Psoas muscle (tissue), 8 donors: ENCODE measurements at regions of chr10 and their contacts with region 1.

Region 1: DNA sequence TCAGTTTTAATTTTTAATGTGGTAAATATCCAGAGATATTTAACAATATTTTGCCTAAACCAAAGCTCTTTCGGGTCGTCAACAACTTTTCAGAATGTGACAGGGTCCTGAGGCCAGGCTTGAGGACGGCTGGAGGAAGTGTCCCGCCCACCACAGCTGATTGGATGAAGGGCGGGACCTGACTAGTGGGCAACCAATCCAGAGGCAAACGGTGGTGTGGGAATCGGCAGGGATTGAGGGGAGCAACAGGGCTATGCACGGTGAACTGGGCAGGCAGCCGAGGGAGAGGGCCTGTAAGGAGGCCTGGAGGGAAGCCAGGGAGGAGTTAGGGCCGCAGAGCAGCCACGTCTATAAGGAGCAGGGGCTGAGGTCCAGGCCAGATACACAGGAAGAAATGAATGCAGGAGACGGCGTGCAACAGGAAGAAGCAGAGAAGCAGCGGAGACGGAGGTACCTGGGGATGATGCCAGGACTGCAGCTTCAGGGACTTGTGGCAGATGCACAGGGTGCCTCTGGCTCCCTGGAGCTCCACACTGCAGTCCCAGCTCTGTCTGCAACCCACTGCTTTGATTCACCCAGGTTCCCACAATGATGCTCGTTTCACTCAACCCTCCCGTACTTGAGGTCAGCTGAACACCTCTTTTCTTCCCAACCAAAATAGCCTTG is 46.1 kb upstream of the ZMIZ1 start:
- DNase-seq: peak; percentile 59 to 73
- ATAC-seq: peak; percentile 65 to 82 (median 80)
- H3K4me3 ChIP-seq: peak overlapping the region; percentile 49
- H3K27ac ChIP-seq: peak overlapping the region; percentile 92
- H3K4me1 ChIP-seq: peaks cover 24% of the 10 kb centered on the region
- H3K27me3 ChIP-seq: no peaks in the 10 kb centered on the region
- CTCF ChIP-seq: no peak

Region 2: DNA sequence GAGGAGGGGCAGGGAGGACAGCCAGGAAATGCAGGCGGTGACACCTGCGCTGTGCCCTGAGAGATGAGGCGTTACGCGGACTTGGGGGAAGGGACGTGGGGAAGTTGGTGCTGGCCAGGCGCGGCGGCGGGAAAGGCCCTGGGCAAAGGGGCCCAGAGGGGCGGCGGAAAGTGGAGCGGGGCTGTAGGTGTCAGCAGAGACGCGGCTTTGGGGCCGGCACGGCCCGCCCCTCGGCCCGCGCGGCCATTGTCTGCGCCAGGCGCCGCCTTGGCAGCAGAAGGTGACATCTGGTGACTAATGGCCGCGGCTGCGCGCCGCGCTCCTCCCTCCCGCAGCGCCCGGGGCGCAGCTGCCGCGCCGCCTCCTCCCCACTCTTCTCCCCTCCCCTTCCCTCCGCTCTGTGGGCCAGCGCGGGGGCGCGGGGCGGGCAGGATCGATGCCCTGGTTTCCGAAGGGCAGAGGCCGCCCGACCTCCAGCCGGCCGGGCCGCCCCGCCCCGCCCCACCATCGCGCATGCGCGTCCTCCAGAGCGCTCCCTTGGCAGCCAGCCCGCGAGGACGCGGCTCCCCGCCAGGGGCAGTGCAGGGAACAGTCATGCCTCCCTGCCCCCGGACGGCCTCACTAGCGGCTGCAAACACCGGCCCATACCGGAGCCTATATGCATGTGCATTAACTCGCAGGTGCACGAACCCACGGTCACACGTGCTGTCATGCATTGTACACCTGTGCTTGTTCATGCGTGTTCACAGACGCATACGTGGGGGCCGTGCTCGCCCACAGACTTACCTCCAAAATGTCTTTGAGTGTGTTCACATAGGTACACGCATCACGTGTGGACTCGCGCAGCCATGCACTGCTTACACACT is 719.5 kb before region 1 on chr10:
- intact Hi-C with region 1: loop called in 1 of 2 experiments (anchors 2 kb)
- DNase-seq: peak; percentile 96 to 97
- ATAC-seq: peak; percentile 94 to 96 (median 96)
- H3K4me3 ChIP-seq: peak overlapping the region; percentile 79
- H3K27ac ChIP-seq: peak overlapping the region; percentile 89
- H3K4me1 ChIP-seq: peaks cover 14% of the 10 kb centered on the region
- H3K27me3 ChIP-seq: no peaks in the 10 kb centered on the region
- CTCF ChIP-seq: peak; percentile 60

Region 3: DNA sequence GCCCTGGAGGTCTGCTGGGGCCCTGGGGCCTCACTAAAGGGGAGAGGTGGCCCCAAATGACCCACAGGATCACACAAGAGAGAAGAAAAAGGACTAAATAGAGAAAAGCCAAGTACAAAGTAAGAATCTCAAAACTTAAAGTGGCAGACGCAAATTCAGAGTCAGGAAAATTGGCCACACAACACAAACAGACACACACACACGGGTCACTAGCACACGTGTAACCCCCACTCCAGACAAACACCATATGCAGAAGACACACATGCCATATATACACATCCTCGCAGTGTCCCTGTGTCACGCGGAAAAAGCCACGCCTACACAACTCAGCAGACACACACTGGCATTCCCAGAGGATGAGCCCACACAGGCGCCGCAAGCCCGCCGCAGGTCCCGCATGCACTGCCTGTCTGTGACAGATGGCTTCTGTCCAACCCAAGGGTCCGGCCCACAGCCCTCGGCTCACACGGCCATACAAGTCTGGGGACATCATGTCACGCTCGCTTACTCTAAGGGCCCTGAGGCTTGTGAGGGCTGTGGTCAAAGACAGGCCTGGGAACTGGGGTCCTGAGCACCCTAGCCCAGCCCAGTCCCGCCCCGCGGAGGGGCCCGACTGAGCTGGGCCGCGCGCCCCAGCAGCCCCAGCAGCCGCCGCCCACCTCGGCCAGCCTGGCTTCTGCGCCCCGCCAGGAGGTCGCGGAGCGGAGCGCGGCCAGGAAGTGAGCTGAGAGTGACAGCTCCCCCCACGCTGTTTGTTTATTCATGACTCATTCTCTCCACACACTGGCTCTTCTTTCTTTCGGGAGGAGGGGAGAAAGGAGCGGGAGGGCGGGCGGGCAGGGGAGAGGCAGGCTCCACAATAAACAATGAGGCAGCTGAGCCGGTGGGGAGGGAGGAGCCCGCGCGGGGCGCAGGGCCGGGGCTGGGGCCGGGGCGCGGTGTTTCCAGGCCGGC is 49.5 kb before region 1 on chr10:
- intact Hi-C with region 1: loop called in 1 of 2 experiments (anchors 2 kb)
- DNase-seq: peak; percentile 81 to 90
- ATAC-seq: peak; percentile 73 to 78 (median 76)
- H3K4me3 ChIP-seq: peak overlapping the region; percentile 65
- H3K27ac ChIP-seq: peak overlapping the region; percentile 99
- H3K4me1 ChIP-seq: peaks cover 27% of the 10 kb centered on the region
- H3K27me3 ChIP-seq: no peaks in the 10 kb centered on the region
- CTCF ChIP-seq: no peak

Region 4: GRCh38 chr10:79061441-79062315 is 39.0 kb after region 1 on chr10:
- intact Hi-C with region 1: loop called in 1 of 2 experiments (anchors 2 kb)
- DNase-seq: peak; percentile 4 to 33
- ATAC-seq: no peak
- H3K4me3 ChIP-seq: no peak overlapping the region
- H3K27ac ChIP-seq: no peak overlapping the region
- H3K4me1 ChIP-seq: no peaks in the 10 kb centered on the region
- H3K27me3 ChIP-seq: no peaks in the 10 kb centered on the region
- CTCF ChIP-seq: no peak